A549 (cell line): ENCODE measurements at regions of chr9 and their contacts with region 1.

Region 1: GRCh38 chr9:130461218-130461630 is 16.5 kb downstream of the ASS1 start:
- DNase-seq: peak; percentile 39 to 59
- ATAC-seq: peak; percentile 63 to 82
- H3K4me3 ChIP-seq: no peak overlapping the region
- H3K27ac ChIP-seq: no peak overlapping the region
- H3K4me1 ChIP-seq: no peaks in the 10 kb centered on the region
- CTCF ChIP-seq: peak; percentile 86
- EP300 ChIP-seq: no peak
- POLR2A ChIP-seq: no peak
- RAD21 ChIP-seq: peak; percentile 89 to 96

Region 2: GRCh38 chr9:130444565-130445221 is 16.5 kb before region 1 on chr9 and contains the start of gene ASS1:
- CTCF ChIA-PET with region 1: interaction called, 69 read pairs
- POLR2A ChIA-PET with region 1: no interaction called
- DNase-seq: peak in 1 of 2 experiments; percentile 68
- ATAC-seq: peak; percentile 70 to 83
- H3K4me3 ChIP-seq: peak within 1 kb of the TSS; percentile 77
- H3K27ac ChIP-seq: peak within 1 kb of the TSS; percentile 58 to 85; a peak in 5 of 6 replicates
- H3K4me1 ChIP-seq: peaks cover 31% of the 10 kb centered on the region
- CTCF ChIP-seq: no peak
- EP300 ChIP-seq: no peak
- POLR2A ChIP-seq: no peak
- RAD21 ChIP-seq: no peak
- polyA plus RNA-seq, gene ASS1: 32.5 and 36.9 TPM in 2 replicates

Region 3: DNA sequence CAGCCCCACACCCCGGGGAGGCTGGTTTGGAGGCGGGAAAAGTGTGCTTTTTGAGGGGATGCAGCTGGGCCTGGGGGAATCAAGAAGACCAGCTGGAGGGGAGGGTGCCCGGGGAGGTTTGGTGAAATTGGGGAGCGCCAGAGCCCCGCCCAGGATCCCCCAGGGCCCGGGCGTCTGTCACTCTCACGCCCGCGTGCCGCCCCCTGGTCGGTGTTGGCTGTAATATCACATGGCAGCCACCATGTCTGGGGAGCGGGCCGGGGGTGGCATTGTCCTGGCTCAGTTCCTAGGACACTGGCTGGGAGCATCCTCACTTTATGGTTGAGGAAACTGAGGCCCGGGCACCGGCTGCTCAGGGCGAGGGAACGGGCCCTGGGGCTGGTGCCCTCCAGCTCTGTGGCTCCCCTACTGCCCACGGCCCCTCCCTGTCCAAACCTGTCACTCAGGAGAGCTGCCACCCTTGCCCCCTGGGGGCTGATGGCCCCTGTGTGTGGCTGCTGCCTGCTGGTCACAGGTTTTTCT is 11.0 kb after region 1 on chr9:
- CTCF ChIA-PET with region 1: interaction called, 56 read pairs
- POLR2A ChIA-PET with region 1: no interaction called
- DNase-seq: no peak
- ATAC-seq: no peak
- H3K4me3 ChIP-seq: no peak overlapping the region
- H3K27ac ChIP-seq: no peak overlapping the region
- H3K4me1 ChIP-seq: no peaks in the 10 kb centered on the region
- CTCF ChIP-seq: no peak
- EP300 ChIP-seq: no peak
- POLR2A ChIP-seq: no peak
- RAD21 ChIP-seq: no peak

Region 4: GRCh38 chr9:130483371-130484303 is 22.4 kb after region 1 on chr9:
- CTCF ChIA-PET with region 1: interaction called, 20 read pairs
- POLR2A ChIA-PET with region 1: no interaction called
- DNase-seq: no peak
- ATAC-seq: no peak
- H3K4me3 ChIP-seq: no peak overlapping the region
- H3K27ac ChIP-seq: no peak overlapping the region
- H3K4me1 ChIP-seq: no peaks in the 10 kb centered on the region
- CTCF ChIP-seq: no peak
- EP300 ChIP-seq: no peak
- POLR2A ChIP-seq: no peak
- RAD21 ChIP-seq: no peak

Region 5: GRCh38 chr9:130626249-130626992 is 165.2 kb after region 1 on chr9:
- CTCF ChIA-PET with region 1: interaction called, 30 read pairs
- POLR2A ChIA-PET with region 1: no interaction called
- DNase-seq: peak in 1 of 2 experiments; percentile 32
- ATAC-seq: peak; percentile 49 to 61; a peak in 4 of 6 replicates
- H3K4me3 ChIP-seq: no peak overlapping the region
- H3K27ac ChIP-seq: no peak overlapping the region
- H3K4me1 ChIP-seq: no peaks in the 10 kb centered on the region
- CTCF ChIP-seq: no peak
- EP300 ChIP-seq: no peak
- POLR2A ChIP-seq: no peak
- RAD21 ChIP-seq: no peak